Gastrocnemius medialis (tissue), 4 donors: ENCODE measurements at regions of chr12 and their contacts with region 1.

Region 1: GRCh38 chr12:53159195-53159839 is 21.2 kb upstream of the ZNF740 start:
- DNase-seq: peak; percentile 32 to 67
- ATAC-seq: peak; percentile 45 to 91
- H3K4me3 ChIP-seq: no peak overlapping the region
- H3K27ac ChIP-seq: no peak overlapping the region
- H3K4me1 ChIP-seq: peaks cover 4 to 9% of the 10 kb centered on the region in 2 donors
- H3K27me3 ChIP-seq: no peaks in the 10 kb centered on the region
- CTCF ChIP-seq: peak; percentile 82 to 90 (median 85)
- POLR2A ChIP-seq: no peak

Region 2: DNA sequence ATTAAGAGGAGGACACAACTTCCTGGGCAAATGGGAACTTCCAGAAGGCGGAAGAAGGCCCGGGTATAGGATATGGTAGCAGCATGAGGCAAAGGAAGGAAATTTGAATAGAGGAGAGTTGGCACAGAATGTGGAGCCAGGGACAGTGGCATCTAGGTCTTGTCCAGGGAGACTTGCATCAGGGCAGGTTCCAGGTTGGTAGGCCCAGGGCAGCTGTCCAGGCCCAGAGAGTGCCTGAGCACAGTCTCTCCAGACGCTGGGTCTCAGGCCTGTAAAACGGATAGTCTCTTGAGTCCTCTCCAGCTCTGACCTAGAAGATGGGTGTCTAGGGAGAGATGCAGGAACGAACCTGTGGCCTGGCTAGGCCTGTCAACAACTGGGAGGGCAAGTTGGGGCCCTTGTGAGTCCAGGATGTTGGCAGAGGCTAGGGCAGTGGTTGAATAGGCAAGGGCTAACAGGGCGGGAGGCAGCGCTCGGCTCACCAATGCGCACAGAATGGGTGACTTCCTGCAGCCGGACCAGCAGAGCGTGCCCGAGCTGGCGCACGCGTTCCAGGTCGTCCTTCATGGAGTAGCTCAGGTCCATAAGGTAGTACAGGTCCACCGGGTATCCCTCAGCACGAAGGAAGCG is 37.8 kb after region 1 on chr12:
- in situ Hi-C with region 1: no loop called
- intact Hi-C with region 1: loop called (anchors 1 kb)
- DNase-seq: no peak
- ATAC-seq: peak in 1 of 2 donors; percentile 22
- H3K4me3 ChIP-seq: peak overlapping the region; percentile 24 to 38 (median 29)
- H3K27ac ChIP-seq: no peak overlapping the region
- H3K4me1 ChIP-seq: peaks cover 0 to 9% of the 10 kb centered on the region in 2 donors
- H3K27me3 ChIP-seq: peaks cover 0 to 5% (median 3%) of the 10 kb centered on the region in 3 donors
- CTCF ChIP-seq: no peak
- POLR2A ChIP-seq: no peak